PC-9 (cell line): ENCODE measurements at regions of chr22 and their contacts with region 1.

Region 1: GRCh38 chr22:46798366-46799350 is 36.2 kb downstream of the TBC1D22A start:
- DNase-seq: peak; percentile 72 to 78
- H3K4me3 ChIP-seq: no peak overlapping the region
- H3K27ac ChIP-seq: no peak overlapping the region
- H3K4me1 ChIP-seq: no peaks in the 10 kb centered on the region
- H3K27me3 ChIP-seq: no peaks in the 10 kb centered on the region
- CTCF ChIP-seq: peak; percentile 99

Region 2: GRCh38 chr22:46737976-46738646 is 60.5 kb before region 1 on chr22 and contains the start of gene CERK:
- CTCF ChIA-PET with region 1: interaction called, 4 read pairs
- POLR2A ChIA-PET with region 1: no interaction called
- intact Hi-C with region 1: loop called (anchors 1 kb)
- DNase-seq: peak in 1 of 2 experiments; percentile 59
- H3K4me3 ChIP-seq: peak within 1 kb of the TSS; percentile 81
- H3K27ac ChIP-seq: no peak within 1 kb of the TSS
- H3K4me1 ChIP-seq: peaks cover 50% of the 10 kb centered on the region
- H3K27me3 ChIP-seq: no peaks in the 10 kb centered on the region
- CTCF ChIP-seq: no peak
- total RNA-seq, gene CERK: 24.9 and 25.9 TPM in 2 replicates

Region 3: GRCh38 chr22:46934746-46935491 is 136.3 kb after region 1 on chr22:
- CTCF ChIA-PET with region 1: no interaction called
- POLR2A ChIA-PET with region 1: no interaction called
- intact Hi-C with region 1: no loop called
- DNase-seq: peak; percentile 57 to 91
- H3K4me3 ChIP-seq: no peak overlapping the region
- H3K27ac ChIP-seq: peak overlapping the region; percentile 42
- H3K4me1 ChIP-seq: peaks cover 22% of the 10 kb centered on the region
- H3K27me3 ChIP-seq: no peaks in the 10 kb centered on the region
- CTCF ChIP-seq: no peak